ENCODE measurements at regions of chr1 and their contacts with region 1.

Region 1: GRCh38 chr1:234628089-234628488 is 18.1 kb upstream of the IRF2BP2 start:
- DNase-seq: no peak
- ATAC-seq: no peak
- H3K4me3 ChIP-seq: no peak overlapping the region
- H3K4me3 Mint-ChIP-seq: no peak overlapping the region
- H3K27ac ChIP-seq: no peak overlapping the region
- H3K27ac Mint-ChIP-seq: no peak overlapping the region
- H3K4me1 ChIP-seq: peaks cover 6 to 7% of the 10 kb centered on the region in 2 donors
- H3K4me1 Mint-ChIP-seq: peaks cover 6% of the 10 kb centered on the region
- H3K27me3 ChIP-seq: no peaks in the 10 kb centered on the region
- H3K27me3 Mint-ChIP-seq: peaks cover 5% of the 10 kb centered on the region
- CTCF ChIP-seq: no peak

Region 2: GRCh38 chr1:234533975-234534876 is 93.9 kb before region 1 on chr1:
- CTCF ChIA-PET with region 1: no interaction called
- POLR2A ChIA-PET with region 1: no interaction called
- intact Hi-C with region 1: no loop called
- DNase-seq: no peak
- ATAC-seq: no peak
- H3K4me3 ChIP-seq: no peak overlapping the region
- H3K4me3 Mint-ChIP-seq: no peak overlapping the region
- H3K27ac ChIP-seq: no peak overlapping the region
- H3K27ac Mint-ChIP-seq: no peak overlapping the region
- H3K4me1 ChIP-seq: peaks cover 5 to 6% of the 10 kb centered on the region in 2 donors
- H3K4me1 Mint-ChIP-seq: peaks cover 5% of the 10 kb centered on the region
- H3K27me3 ChIP-seq: no peaks in the 10 kb centered on the region
- H3K27me3 Mint-ChIP-seq: no peaks in the 10 kb centered on the region
- CTCF ChIP-seq: no peak

Region 3: DNA sequence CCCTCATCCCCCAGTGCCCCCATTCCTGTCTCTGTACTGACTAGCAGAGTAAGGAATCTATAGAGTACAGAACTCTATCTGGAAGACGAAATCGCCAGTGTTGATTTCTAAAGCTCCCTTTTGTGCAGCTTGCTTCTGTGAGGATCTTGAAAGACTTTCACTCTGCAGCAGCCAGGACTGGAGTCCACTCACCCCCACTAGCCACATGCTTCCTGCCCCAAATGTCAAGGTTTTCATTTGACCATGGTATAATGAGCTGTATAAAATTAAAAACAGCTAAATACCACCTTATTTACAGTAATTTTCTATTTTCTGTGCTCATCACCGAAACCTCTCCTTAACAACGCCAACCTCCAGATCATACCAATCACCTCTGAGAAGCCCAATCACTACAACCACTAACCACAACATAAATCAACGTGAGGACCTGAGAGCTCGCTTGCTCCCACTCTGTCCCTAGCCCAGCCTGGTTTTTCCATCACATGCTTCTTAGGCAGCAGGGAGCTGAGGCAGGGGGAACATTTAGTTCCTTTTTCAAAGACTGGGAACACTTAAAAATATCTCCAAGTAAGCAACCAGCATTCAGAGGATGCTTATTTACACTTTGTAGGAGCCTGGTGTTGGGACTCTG is 38.0 kb after region 1 on chr1:
- CTCF ChIA-PET with region 1: no interaction called
- POLR2A ChIA-PET with region 1: no interaction called
- intact Hi-C with region 1: loop called (anchors 5 kb)
- DNase-seq: no peak
- ATAC-seq: no peak
- H3K4me3 ChIP-seq: no peak overlapping the region
- H3K4me3 Mint-ChIP-seq: no peak overlapping the region
- H3K27ac ChIP-seq: no peak overlapping the region
- H3K27ac Mint-ChIP-seq: no peak overlapping the region
- H3K4me1 ChIP-seq: no peaks in the 10 kb centered on the region
- H3K4me1 Mint-ChIP-seq: peaks cover under 1% of the 10 kb centered on the region
- H3K27me3 ChIP-seq: no peaks in the 10 kb centered on the region
- H3K27me3 Mint-ChIP-seq: no peaks in the 10 kb centered on the region
- CTCF ChIP-seq: no peak

Measured in B cell (primary cell).